ENCODE measurements at regions of chr2 and their contacts with region 1.

Region 1: DNA sequence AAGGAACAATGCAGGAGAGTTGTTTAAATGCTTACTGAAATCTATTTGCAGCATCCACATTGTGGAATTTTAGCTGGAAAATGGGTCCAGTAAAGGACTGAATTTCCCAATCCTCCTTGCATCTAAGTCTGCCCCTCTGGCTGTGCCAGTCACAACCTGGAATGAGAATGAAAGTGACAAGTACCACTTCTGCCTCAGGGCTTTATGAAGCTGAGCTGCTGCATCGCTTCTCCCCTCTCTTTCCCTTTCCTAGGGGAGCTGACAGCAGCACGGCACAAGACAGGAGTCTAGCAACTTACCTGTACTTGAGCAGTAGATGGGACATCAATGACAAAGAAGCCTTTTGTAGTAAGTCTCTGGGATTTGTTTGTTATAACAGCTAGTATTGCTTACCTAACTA is 27.3 kb upstream of the THSD7B start:
- DNase-seq: no peak
- ATAC-seq: no peak
- H3K4me3 Mint-ChIP-seq: no peak overlapping the region
- H3K27ac Mint-ChIP-seq: no peak overlapping the region
- H3K4me1 Mint-ChIP-seq: no peaks in the 10 kb centered on the region
- H3K27me3 Mint-ChIP-seq: peaks cover 14% of the 10 kb centered on the region

Region 2: DNA sequence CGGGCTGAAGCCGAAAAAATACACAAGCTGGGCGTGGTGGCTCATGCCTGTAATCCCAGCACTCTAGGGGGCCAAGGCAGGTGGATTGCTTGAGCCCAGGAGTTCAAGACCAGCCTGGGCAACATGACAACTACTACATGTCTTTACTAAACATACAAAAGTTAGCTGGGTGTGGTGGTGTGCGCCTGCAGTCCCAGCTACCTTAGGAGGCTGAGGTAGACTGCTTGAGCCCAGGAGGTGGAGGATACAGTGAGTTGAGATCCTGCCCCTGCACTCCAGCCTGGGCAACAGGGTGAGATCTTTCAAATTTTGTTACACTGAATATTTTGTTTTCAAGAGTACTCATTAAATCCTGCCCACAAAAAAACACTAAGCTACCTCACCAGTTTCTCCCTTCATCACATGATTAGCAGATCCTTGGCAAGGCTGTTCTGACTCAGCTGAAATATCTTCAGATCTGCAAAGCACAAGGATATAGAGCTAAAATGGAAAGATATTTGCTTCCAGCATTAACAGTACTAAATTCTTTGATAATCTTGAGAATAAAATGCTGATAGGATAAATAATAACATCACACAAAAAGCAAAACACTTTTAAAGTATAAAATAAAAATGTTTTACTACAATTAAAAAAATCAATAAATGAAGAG is 833.6 kb before region 1 on chr2:
- CTCF ChIA-PET with region 1: no interaction called
- POLR2A ChIA-PET with region 1: no interaction called
- intact Hi-C with region 1: loop called in 1 of 2 experiments (anchors 10 kb)
- DNase-seq: no peak
- ATAC-seq: peak; percentile 55
- H3K4me3 Mint-ChIP-seq: no peak overlapping the region
- H3K27ac Mint-ChIP-seq: no peak overlapping the region
- H3K4me1 Mint-ChIP-seq: no peaks in the 10 kb centered on the region
- H3K27me3 Mint-ChIP-seq: no peaks in the 10 kb centered on the region

Region 3: DNA sequence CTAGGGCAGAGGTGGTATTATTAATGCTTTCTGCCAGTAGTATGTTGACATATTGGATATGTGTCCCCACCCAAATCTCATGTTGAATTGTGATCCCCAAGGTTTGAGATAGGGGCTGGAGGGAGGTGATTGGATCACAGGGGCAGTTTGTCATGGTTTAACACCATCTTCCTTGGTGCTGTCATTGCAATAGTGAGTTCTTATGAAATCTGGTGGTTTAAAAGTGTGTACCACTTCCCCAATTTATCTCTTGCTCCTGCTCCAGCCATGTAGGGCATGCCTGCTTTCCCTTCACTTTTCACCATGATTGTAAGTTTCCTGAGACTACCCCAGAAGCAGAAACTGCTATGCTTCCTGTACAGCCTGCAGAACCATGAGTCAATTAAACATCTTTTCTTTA is 19.8 kb before region 1 on chr2:
- CTCF ChIA-PET with region 1: no interaction called
- POLR2A ChIA-PET with region 1: no interaction called
- intact Hi-C with region 1: no loop called
- DNase-seq: no peak
- ATAC-seq: no peak
- H3K4me3 Mint-ChIP-seq: no peak overlapping the region
- H3K27ac Mint-ChIP-seq: no peak overlapping the region
- H3K4me1 Mint-ChIP-seq: no peaks in the 10 kb centered on the region
- H3K27me3 Mint-ChIP-seq: no peaks in the 10 kb centered on the region

Region 4: GRCh38 chr2:136765736-136766323 is 27.8 kb after region 1 on chr2:
- CTCF ChIA-PET with region 1: no interaction called
- POLR2A ChIA-PET with region 1: no interaction called
- intact Hi-C with region 1: no loop called
- DNase-seq: peak; percentile 21
- ATAC-seq: no peak
- H3K4me3 Mint-ChIP-seq: no peak overlapping the region
- H3K27ac Mint-ChIP-seq: no peak overlapping the region
- H3K4me1 Mint-ChIP-seq: peaks cover 8% of the 10 kb centered on the region
- H3K27me3 Mint-ChIP-seq: peaks cover 45% of the 10 kb centered on the region